ENCODE measurements at regions of chr5 and their contacts with region 1.

Region 1: DNA sequence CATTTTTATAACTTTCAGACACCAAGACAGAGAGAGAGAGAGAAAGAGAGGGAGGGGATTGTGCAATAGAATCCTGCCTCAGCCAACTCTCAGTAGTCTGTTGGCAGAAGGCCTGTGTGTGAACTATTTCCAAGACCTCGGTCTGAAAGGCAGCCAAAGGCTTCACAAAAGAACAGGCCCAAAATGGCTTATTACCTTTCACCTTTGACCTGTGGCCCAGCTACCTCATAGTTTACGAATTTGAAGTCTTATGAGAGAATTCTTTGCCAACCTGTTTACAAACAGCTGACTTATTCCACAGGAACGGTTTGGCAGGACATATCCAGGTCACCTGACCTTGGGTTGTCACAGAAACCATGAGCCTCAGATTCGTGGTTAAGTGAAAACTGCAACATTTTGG is 48.6 kb downstream of the NR2F1-AS1 start:
- DNase-seq: peak; percentile 91
- H3K4me3 ChIP-seq: no peak overlapping the region
- H3K27ac ChIP-seq: peak overlapping the region; percentile 48 to 57
- H3K4me1 ChIP-seq: peaks cover 0 to 6% of the 10 kb centered on the region in 2 donors
- H3K27me3 ChIP-seq: no peaks in the 10 kb centered on the region
- CTCF ChIP-seq: no peak
- POLR2A ChIP-seq: no peak

Region 2: GRCh38 chr5:93311881-93312280 is 220.5 kb before region 1 on chr5:
- intact Hi-C with region 1: no loop called
- DNase-seq: peak; percentile 17 to 26
- H3K4me3 ChIP-seq: no peak overlapping the region
- H3K27ac ChIP-seq: peak overlapping the region in 1 of 2 donors; percentile 27
- H3K4me1 ChIP-seq: no peaks in the 10 kb centered on the region
- H3K27me3 ChIP-seq: no peaks in the 10 kb centered on the region
- CTCF ChIP-seq: no peak
- POLR2A ChIP-seq: no peak

Region 3: DNA sequence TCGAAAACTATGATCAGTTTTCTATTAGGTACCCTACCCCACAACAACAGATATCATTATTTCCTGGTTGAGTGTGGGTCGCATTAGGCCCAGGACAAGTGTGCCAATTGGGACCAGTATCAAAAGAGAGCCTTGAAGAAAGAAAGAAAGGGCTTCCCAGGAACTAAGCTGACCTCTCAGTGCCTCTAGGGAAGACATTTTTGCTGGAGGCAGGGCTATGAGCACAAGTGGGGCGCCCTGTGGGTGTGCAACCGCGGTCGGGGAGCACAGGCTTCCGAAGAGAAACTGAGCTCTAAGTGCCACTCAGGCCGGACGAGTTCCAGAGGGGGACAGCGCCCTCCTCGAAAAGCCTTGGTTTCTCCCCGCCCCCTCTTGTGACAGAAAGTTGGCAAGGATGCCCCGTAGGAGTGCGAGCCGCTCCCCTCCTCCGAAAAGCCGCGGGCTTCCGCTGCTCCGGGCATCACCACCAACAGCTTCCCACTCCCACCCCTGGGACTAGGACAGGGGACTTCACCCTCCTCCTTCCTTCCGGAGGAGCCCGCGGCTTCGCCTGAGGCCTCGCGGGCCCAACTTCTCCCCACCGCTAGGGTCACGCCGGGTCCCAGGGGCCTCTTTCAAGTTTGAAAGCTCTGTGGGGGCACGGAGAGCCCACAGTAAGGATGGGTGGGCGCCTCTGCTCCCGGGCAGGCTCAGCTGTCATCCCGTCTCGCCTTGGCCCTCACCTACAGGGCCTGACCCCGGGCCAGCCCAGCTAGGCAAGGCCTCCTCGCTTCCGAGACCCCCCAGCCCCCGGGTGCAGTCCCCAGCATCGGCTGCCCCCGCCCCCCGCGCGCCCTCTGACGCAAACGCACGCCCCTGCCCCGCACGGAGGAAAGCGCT is 46.7 kb after region 1 on chr5:
- intact Hi-C with region 1: loop called (anchors 5 kb)
- DNase-seq: peak; percentile 76 to 83
- H3K4me3 ChIP-seq: peak overlapping the region; percentile 53 to 65
- H3K27ac ChIP-seq: peak overlapping the region; percentile 90 to 92
- H3K4me1 ChIP-seq: no peaks in the 10 kb centered on the region
- H3K27me3 ChIP-seq: peaks cover 0 to 3% of the 10 kb centered on the region in 2 donors
- CTCF ChIP-seq: peak in 1 of 4 experiments; percentile 11
- POLR2A ChIP-seq: peak in 1 of 2 donors; percentile 28

Region 4: GRCh38 chr5:93691997-93692396 is 159.6 kb after region 1 on chr5:
- intact Hi-C with region 1: no loop called
- DNase-seq: no peak
- H3K4me3 ChIP-seq: no peak overlapping the region
- H3K27ac ChIP-seq: no peak overlapping the region
- H3K4me1 ChIP-seq: no peaks in the 10 kb centered on the region
- H3K27me3 ChIP-seq: no peaks in the 10 kb centered on the region
- CTCF ChIP-seq: no peak
- POLR2A ChIP-seq: no peak